Panc1 (cell line): ENCODE measurements at regions of chr19 and their contacts with region 1.

Region 1: DNA sequence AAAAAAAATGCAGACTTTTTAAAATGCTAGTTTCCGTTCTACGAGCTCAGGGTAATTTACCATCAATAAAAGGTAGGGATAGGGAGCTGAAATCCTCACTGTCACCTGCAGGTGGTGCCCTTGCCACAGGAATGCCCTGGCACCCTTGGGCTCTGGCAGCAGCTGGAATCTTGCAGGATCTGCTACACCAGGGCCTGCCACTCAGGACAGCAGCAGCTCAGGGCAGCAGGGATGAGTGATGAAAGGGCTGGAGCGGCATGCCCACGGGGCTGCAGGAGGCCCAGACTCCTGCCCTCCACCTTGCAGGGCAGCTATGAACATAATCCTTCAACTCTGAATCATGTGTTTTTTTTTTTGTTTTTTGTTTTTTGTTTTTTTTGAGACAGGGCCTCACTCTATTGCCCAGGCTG is 54.0 kb downstream of the GNG7 start:
- DNase-seq: peak; percentile 62
- ATAC-seq: peak; percentile 94
- H3K4me3 ChIP-seq: no peak overlapping the region
- H3K27ac ChIP-seq: no peak overlapping the region
- H3K4me1 ChIP-seq: no peaks in the 10 kb centered on the region
- H3K27me3 ChIP-seq: no peaks in the 10 kb centered on the region
- CTCF ChIP-seq: peak; percentile 82

Region 2: DNA sequence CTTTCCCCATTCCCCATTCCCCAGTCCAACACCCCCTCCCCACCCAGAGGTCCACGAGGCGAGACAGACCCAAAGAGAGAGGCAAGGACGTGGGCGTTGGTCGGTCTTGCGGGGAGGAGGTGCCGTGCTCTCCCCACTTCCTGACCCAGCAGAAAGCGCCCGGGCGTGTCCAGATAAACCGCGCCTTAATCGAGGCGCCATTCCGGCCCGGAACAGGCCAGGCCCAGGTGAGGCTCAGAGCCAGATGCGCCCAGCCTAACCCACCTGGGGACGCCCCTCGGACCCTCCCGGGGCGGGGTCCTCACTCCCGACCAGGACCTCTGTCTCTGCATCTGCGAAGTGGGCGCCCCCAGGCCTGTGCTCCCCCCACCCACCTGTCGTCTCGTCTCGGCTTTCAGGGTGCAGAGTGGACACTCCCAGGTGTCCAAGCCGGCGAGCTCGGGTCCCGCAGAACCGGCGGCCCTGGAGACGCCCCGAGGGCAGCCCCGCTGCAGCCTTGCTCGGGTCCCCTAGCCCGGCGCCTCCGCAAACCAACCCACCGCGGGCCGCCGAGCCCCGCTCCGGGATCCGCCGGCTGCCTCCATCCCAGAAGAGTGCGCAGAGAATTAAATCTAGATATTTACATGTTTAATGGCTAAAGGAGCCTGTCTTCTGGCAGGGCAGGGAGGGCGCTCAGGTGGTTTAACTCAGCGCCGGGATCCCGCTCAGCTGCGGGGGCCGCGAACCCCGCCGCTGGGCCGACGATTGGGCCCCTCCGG is 900.2 kb before region 1 on chr19:
- CTCF ChIA-PET with region 1: no interaction called
- POLR2A ChIA-PET with region 1: no interaction called
- in situ Hi-C with region 1: no loop called
- intact Hi-C with region 1: no loop called
- DNase-seq: no peak
- ATAC-seq: peak; percentile 56
- H3K4me3 ChIP-seq: peak overlapping the region; percentile 37 to 49
- H3K27ac ChIP-seq: peak overlapping the region; percentile 90
- H3K4me1 ChIP-seq: peaks cover 49% of the 10 kb centered on the region
- H3K27me3 ChIP-seq: no peaks in the 10 kb centered on the region
- CTCF ChIP-seq: no peak

Region 3: GRCh38 chr19:2665145-2665544 is 16.6 kb after region 1 on chr19:
- CTCF ChIA-PET with region 1: interaction called, 12 read pairs
- POLR2A ChIA-PET with region 1: no interaction called
- in situ Hi-C with region 1: no loop called
- intact Hi-C with region 1: no loop called
- DNase-seq: no peak
- ATAC-seq: no peak
- H3K4me3 ChIP-seq: no peak overlapping the region
- H3K27ac ChIP-seq: no peak overlapping the region
- H3K4me1 ChIP-seq: no peaks in the 10 kb centered on the region
- H3K27me3 ChIP-seq: no peaks in the 10 kb centered on the region
- CTCF ChIP-seq: no peak

Region 4: GRCh38 chr19:2750808-2751443 is 102.4 kb after region 1 on chr19:
- CTCF ChIA-PET with region 1: interaction called, 9 read pairs
- POLR2A ChIA-PET with region 1: no interaction called
- in situ Hi-C with region 1: no loop called
- intact Hi-C with region 1: loop called (anchors 2 kb)
- DNase-seq: no peak
- ATAC-seq: no peak
- H3K4me3 ChIP-seq: no peak overlapping the region
- H3K27ac ChIP-seq: no peak overlapping the region
- H3K4me1 ChIP-seq: no peaks in the 10 kb centered on the region
- H3K27me3 ChIP-seq: no peaks in the 10 kb centered on the region
- CTCF ChIP-seq: no peak

Region 5: GRCh38 chr19:2869618-2870017 is 221.1 kb after region 1 on chr19:
- CTCF ChIA-PET with region 1: no interaction called
- POLR2A ChIA-PET with region 1: no interaction called
- in situ Hi-C with region 1: no loop called
- intact Hi-C with region 1: loop called (anchors 5 kb)
- DNase-seq: no peak
- ATAC-seq: no peak
- H3K4me3 ChIP-seq: no peak overlapping the region
- H3K27ac ChIP-seq: no peak overlapping the region
- H3K4me1 ChIP-seq: no peaks in the 10 kb centered on the region
- H3K27me3 ChIP-seq: no peaks in the 10 kb centered on the region
- CTCF ChIP-seq: no peak